Naive thymus-derived CD4-positive, alpha-beta T cell (primary cell): ENCODE measurements at regions of chr21 and their contacts with region 1.

Region 1: GRCh38 chr21:35528116-35529042 is 479.3 kb upstream of the RUNX1 start:
- DNase-seq: peak; percentile 14 to 57 (median 42)
- ATAC-seq: peak; percentile 70
- H3K4me3 ChIP-seq: peak overlapping the region; percentile 91
- H3K4me3 Mint-ChIP-seq: peak overlapping the region; percentile 82 to 93 (median 90)
- H3K27ac ChIP-seq: peak overlapping the region; percentile 84
- H3K27ac Mint-ChIP-seq: peak overlapping the region; percentile 94 to 98 (median 96)
- H3K4me1 ChIP-seq: peaks cover 7 to 31% of the 10 kb centered on the region in 2 donors
- H3K4me1 Mint-ChIP-seq: peaks cover 34 to 61% (median 51%) of the 10 kb centered on the region in 7 donors
- H3K27me3 ChIP-seq: no peaks in the 10 kb centered on the region
- H3K27me3 Mint-ChIP-seq: no peaks in the 10 kb centered on the region

Region 2: DNA sequence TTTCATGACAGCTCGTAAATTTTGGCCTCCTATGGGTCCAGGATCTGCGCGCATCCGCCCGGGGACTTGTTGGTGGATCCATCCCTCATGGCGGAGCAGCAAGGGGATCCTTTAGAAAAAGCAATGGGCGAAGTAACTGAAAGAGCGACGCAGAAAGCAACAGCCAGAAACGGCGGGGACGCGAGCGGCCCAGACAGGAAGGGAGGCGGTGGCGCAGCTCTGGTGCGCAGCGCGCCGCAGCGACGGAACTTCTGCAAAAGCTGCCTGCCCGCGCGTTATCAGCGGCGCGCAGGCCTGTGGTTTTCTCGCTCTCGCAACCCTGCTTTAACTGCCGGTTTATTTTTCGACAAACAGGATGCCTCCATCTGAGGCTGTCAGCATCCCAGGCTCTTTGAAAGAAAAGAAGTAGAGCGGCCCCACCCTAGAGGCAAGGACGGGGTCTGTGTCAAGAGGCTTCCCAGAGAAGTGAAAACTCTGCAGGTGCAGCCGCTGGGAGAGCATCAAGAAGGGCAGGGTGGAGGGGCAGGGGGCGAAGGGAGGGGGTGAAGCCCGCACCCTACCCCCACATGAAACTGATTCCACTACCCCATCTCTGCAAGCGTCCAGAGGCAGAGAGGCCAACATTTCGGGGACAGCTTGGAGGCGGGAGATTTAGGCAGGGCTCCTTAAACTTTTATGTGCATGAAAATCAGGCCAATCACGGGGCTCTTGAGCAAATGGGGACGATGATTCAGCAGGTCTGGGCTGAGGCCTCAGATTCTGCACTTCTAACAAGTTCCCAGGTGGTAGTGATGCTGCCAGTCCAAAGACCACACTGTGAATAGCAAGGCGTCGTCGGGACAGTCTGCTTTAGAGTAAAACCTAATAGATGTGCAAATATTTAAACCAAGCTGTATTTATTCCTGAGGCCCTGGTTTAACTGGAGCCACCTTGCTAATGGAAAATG is 501.5 kb before region 1 on chr21:
- CTCF ChIA-PET with region 1: no interaction called
- POLR2A ChIA-PET with region 1: no interaction called
- intact Hi-C with region 1: loop called in 1 of 2 experiments (anchors 5 kb)
- DNase-seq: peak; percentile 74 to 93 (median 91)
- ATAC-seq: peak; percentile 93
- H3K4me3 ChIP-seq: peak overlapping the region; percentile 45
- H3K4me3 Mint-ChIP-seq: peak overlapping the region; percentile 77 to 98 (median 86)
- H3K27ac ChIP-seq: peak overlapping the region; percentile 75
- H3K27ac Mint-ChIP-seq: peak overlapping the region; percentile 96 to 100 (median 99)
- H3K4me1 ChIP-seq: peaks cover 69 to 85% of the 10 kb centered on the region in 2 donors
- H3K4me1 Mint-ChIP-seq: peaks cover 76 to 98% (median 93%) of the 10 kb centered on the region in 7 donors
- H3K27me3 ChIP-seq: no peaks in the 10 kb centered on the region
- H3K27me3 Mint-ChIP-seq: no peaks in the 10 kb centered on the region

Region 3: GRCh38 chr21:35438643-35439404 is 89.6 kb before region 1 on chr21:
- CTCF ChIA-PET with region 1: interaction called, 3 read pairs
- POLR2A ChIA-PET with region 1: no interaction called
- intact Hi-C with region 1: loop called in 1 of 2 experiments (anchors 5 kb)
- DNase-seq: peak in 7 of 9 donors; percentile 5 to 33 (median 10)
- ATAC-seq: peak; percentile 77
- H3K4me3 ChIP-seq: no peak overlapping the region
- H3K4me3 Mint-ChIP-seq: peak overlapping the region; percentile 48 to 79 (median 62)
- H3K27ac ChIP-seq: no peak overlapping the region
- H3K27ac Mint-ChIP-seq: peak overlapping the region; percentile 16 to 83 (median 72)
- H3K4me1 ChIP-seq: peaks cover 0 to 29% of the 10 kb centered on the region in 2 donors
- H3K4me1 Mint-ChIP-seq: peaks cover 15 to 42% (median 34%) of the 10 kb centered on the region in 7 donors
- H3K27me3 ChIP-seq: no peaks in the 10 kb centered on the region
- H3K27me3 Mint-ChIP-seq: peaks cover 0 to 18% (median 0%) of the 10 kb centered on the region in 5 donors

Region 4: GRCh38 chr21:35475768-35476167 is 52.6 kb before region 1 on chr21:
- CTCF ChIA-PET with region 1: no interaction called
- POLR2A ChIA-PET with region 1: interaction called, 3 read pairs
- intact Hi-C with region 1: loop called in 1 of 2 experiments (anchors 5 kb)
- DNase-seq: peak in 6 of 9 donors; percentile 4 to 33 (median 22)
- ATAC-seq: peak; percentile 76
- H3K4me3 ChIP-seq: no peak overlapping the region
- H3K4me3 Mint-ChIP-seq: peak overlapping the region; percentile 12 to 78 (median 66)
- H3K27ac ChIP-seq: no peak overlapping the region
- H3K27ac Mint-ChIP-seq: peak overlapping the region; percentile 49 to 89 (median 76)
- H3K4me1 ChIP-seq: peaks cover 0 to 25% of the 10 kb centered on the region in 2 donors
- H3K4me1 Mint-ChIP-seq: peaks cover 33 to 69% (median 52%) of the 10 kb centered on the region in 7 donors
- H3K27me3 ChIP-seq: no peaks in the 10 kb centered on the region
- H3K27me3 Mint-ChIP-seq: peaks cover 0 to 5% (median 0%) of the 10 kb centered on the region in 5 donors

Region 5: DNA sequence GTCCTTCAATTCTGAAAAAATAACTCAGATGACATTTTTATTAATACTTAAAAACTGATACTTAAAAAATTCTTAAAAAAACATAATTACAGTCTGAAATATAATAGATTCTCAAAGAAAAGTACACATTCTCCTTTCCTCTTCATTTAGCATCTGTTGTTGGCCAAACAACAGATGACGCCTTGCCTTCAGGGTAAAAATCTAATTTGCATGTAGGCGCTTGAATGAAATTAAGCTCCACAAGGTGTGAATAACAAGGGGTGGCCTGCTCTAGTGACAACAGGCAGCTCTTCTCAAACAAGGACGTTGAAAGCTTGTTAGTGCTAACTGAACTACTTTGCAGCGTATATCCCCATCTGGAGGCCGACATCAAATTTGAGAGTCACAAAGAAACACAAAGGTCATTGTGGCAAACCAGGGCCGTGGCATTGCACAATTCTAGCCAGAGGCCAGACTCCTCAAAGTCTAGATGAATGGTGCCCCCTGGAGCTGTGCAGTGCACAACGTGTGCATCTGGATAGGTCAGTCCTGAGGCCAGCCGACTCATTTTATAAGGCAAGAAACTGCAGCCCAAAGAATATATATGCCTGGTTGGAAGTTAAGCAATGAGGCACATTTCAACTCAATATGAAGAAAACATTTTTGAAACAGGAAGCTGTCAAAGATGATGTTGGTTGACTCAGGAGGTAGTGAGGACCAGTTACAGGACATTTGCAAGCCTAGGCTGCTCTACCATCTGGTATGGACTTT is 20.1 kb before region 1 on chr21:
- CTCF ChIA-PET with region 1: no interaction called
- POLR2A ChIA-PET with region 1: interaction called, 14 read pairs
- intact Hi-C with region 1: loop called in 1 of 2 experiments (anchors 2 kb)
- DNase-seq: peak in 2 of 9 donors; percentile 18 to 25
- ATAC-seq: peak; percentile 77
- H3K4me3 ChIP-seq: no peak overlapping the region
- H3K4me3 Mint-ChIP-seq: peak overlapping the region in 1 of 10 donors; percentile 23
- H3K27ac ChIP-seq: no peak overlapping the region
- H3K27ac Mint-ChIP-seq: peak overlapping the region in 6 of 9 donors; percentile 38 to 70 (median 60)
- H3K4me1 ChIP-seq: peaks cover 0 to 37% of the 10 kb centered on the region in 2 donors
- H3K4me1 Mint-ChIP-seq: peaks cover 30 to 77% (median 70%) of the 10 kb centered on the region in 7 donors
- H3K27me3 ChIP-seq: no peaks in the 10 kb centered on the region
- H3K27me3 Mint-ChIP-seq: peaks cover 0 to 3% (median 0%) of the 10 kb centered on the region in 5 donors